Thyroid gland (tissue), 4 donors: ENCODE measurements at regions of chr3 and their contacts with region 1.

Region 1: DNA sequence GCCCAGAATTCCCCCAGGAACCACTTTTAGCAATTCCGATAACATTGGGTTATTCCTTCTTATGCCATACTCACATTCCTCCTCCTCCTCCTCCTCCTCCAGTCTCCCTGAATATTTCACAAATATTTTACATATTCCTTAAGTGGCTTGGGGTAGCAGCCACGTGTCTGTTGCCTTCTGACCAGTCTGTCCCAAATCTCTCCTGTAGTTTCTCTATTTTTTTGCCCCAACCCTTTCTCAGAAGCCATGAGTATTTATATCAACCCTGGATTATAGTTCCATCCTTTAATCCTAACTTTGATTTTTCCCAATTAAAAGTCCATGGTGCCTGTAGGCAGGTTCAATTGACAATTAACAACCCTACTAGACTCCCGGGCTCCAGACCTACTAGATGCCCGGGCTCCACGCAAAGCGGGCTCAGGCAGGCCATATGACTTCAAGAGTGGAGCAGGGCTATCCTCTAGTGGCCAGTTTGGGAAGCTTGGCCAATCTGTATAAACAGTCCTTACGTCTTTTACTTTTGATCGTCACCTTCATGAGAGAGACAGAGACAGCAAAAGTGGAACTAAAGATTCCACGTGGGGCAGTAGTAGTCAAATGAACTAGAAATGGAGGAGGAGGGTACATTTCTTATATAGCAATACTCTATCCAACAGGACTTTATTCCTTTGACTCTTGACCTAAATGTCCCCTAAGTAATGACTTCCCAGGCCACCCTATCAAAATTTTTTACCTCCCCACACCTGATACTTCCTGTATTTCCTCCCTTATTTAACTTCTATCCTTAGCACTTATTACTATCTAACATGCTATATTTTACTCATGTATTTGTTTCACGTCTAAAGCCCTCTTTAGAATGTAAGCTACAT is 69.7 kb downstream of the USF3 start:
- DNase-seq: peak; percentile 46 to 51
- H3K4me3 ChIP-seq: no peak overlapping the region
- H3K27ac ChIP-seq: no peak overlapping the region
- H3K4me1 ChIP-seq: peaks cover 0 to 11% of the 10 kb centered on the region in 2 donors
- H3K27me3 ChIP-seq: no peaks in the 10 kb centered on the region
- CTCF ChIP-seq: peak; percentile 64 to 89 (median 76)
- POLR2A ChIP-seq: no peak

Region 2: GRCh38 chr3:113495035-113495434 is 131.7 kb before region 1 on chr3:
- intact Hi-C with region 1: loop called (anchors 10 kb)
- DNase-seq: peak; percentile 35 to 48
- H3K4me3 ChIP-seq: no peak overlapping the region
- H3K27ac ChIP-seq: no peak overlapping the region
- H3K4me1 ChIP-seq: no peaks in the 10 kb centered on the region
- H3K27me3 ChIP-seq: no peaks in the 10 kb centered on the region
- CTCF ChIP-seq: peak in 3 of 6 experiments; percentile 46 to 54 (median 48)
- POLR2A ChIP-seq: no peak

Region 3: GRCh38 chr3:113914646-113915045 is 287.9 kb after region 1 on chr3:
- intact Hi-C with region 1: no loop called
- DNase-seq: no peak
- H3K4me3 ChIP-seq: no peak overlapping the region
- H3K27ac ChIP-seq: no peak overlapping the region
- H3K4me1 ChIP-seq: no peaks in the 10 kb centered on the region
- H3K27me3 ChIP-seq: no peaks in the 10 kb centered on the region
- CTCF ChIP-seq: no peak
- POLR2A ChIP-seq: no peak